GM18951 (cell line): ENCODE measurements at regions of chr6 and their contacts with region 1.

Region 1: GRCh38 chr6:159008656-159009288 is 8.8 kb upstream of the RSPH3 start:
- POLR2A ChIP-seq: no peak

Region 2: GRCh38 chr6:159104163-159104925 is 95.6 kb after region 1 on chr6:
- in situ Hi-C with region 1: loop called (anchors 5 kb)
- POLR2A ChIP-seq: no peak